Activated CD4-positive, alpha-beta memory T cell treated with anti-CD3 and anti-CD28 coated beads, Interleukin-2, amount 10 ng/mL, durations not matched to agents 7 days and 5 days (primary cell): ENCODE measurements at regions of chr17 and their contacts with region 1.

Region 1: DNA sequence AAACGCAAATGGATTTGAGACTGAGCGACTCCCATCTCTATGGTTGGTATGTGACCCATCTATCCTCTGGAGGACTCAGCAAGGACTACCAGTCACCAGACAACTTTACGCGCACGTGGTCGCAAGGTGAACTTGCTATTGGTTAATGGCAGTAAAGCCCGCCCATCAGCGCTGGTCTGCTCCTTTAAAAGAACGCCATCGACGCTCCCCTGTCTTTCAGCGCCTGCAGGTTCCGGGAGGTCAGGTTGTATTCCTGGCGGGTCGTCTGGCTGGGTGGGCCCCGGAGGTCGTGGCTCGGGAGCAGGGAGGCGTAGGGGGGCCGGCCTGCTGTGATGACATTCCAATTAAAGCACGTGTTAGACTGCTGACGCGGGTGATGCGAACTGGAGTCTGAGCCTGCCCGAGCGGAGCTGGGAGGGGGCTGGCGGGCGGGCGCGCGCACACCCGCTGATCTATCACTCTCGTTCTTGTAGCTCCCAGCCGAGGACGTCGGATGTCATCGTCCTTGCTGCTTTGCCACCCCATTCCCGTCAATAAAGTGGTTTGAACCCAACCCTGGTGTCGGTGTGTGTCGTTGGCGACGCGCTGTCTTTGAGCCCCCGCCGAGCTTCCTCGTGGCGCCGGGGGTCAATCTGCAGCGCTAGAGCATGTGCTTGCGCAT is 15.9 kb upstream of the ERN1 start:
- DNase-seq: peak; percentile 96
- H3K4me3 Mint-ChIP-seq: no peak overlapping the region
- H3K27ac Mint-ChIP-seq: no peak overlapping the region
- H3K4me1 Mint-ChIP-seq: peaks cover 25% of the 10 kb centered on the region
- H3K27me3 Mint-ChIP-seq: no peaks in the 10 kb centered on the region

Region 2: GRCh38 chr17:63931099-63931561 is 214.8 kb before region 1 on chr17:
- CTCF ChIA-PET with region 1: no interaction called
- POLR2A ChIA-PET with region 1: interaction called, 21 read pairs
- DNase-seq: peak; percentile 79
- H3K4me3 Mint-ChIP-seq: peak overlapping the region; percentile 96
- H3K27ac Mint-ChIP-seq: peak overlapping the region; percentile 90
- H3K4me1 Mint-ChIP-seq: peaks cover 31% of the 10 kb centered on the region
- H3K27me3 Mint-ChIP-seq: peaks cover 4% of the 10 kb centered on the region

Region 3: GRCh38 chr17:64025732-64026294 is 120.1 kb before region 1 on chr17:
- CTCF ChIA-PET with region 1: interaction called, 16 read pairs
- POLR2A ChIA-PET with region 1: interaction called, 54 read pairs
- DNase-seq: peak; percentile 95
- H3K4me3 Mint-ChIP-seq: peak overlapping the region; percentile 73
- H3K27ac Mint-ChIP-seq: peak overlapping the region; percentile 99
- H3K4me1 Mint-ChIP-seq: peaks cover 75% of the 10 kb centered on the region
- H3K27me3 Mint-ChIP-seq: no peaks in the 10 kb centered on the region

Region 4: GRCh38 chr17:64117981-64118979 is 27.6 kb before region 1 on chr17:
- CTCF ChIA-PET with region 1: no interaction called
- POLR2A ChIA-PET with region 1: interaction called, 12 read pairs
- DNase-seq: no peak
- H3K4me3 Mint-ChIP-seq: no peak overlapping the region
- H3K27ac Mint-ChIP-seq: no peak overlapping the region
- H3K4me1 Mint-ChIP-seq: peaks cover 80% of the 10 kb centered on the region
- H3K27me3 Mint-ChIP-seq: no peaks in the 10 kb centered on the region

Region 5: DNA sequence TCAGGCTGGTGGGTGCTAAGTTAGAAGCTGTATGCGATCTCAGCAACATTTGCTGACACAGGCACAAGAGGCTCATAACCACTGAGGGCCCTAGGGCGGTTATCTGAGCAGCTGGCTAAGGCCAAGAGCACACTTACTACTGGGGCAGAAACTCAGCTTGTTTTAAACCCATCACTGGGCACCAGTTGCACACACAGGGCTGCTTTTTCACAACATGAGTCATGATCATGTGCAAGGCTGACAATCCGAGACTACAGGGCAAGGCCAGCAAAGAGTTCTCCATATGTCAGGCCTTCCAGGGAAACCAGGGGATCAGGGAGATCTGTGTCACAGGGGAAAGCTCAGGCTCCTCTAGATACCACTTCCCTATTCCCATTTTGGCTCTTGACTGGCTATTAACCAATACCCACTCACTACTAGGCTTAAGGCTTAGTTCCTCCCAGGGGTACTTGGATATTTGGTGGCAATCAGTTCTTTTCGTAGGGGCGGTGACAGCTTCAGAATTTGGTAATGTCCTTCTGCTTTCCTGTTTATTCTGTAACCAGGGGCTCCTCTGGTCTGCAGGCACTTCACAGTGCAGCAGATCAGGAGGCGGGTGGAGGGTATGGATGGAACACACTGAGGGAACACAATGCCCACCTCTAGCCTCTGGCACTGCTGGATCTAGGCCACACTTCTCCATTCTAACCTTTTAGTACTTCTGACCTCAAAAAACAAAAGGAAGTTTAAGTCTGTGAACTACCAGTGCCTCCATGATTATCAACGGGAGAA is 29.0 kb after region 1 on chr17:
- CTCF ChIA-PET with region 1: no interaction called
- POLR2A ChIA-PET with region 1: interaction called, 16 read pairs
- DNase-seq: no peak
- H3K4me3 Mint-ChIP-seq: no peak overlapping the region
- H3K27ac Mint-ChIP-seq: no peak overlapping the region
- H3K4me1 Mint-ChIP-seq: no peaks in the 10 kb centered on the region
- H3K27me3 Mint-ChIP-seq: no peaks in the 10 kb centered on the region

Region 6: GRCh38 chr17:64281962-64282727 is 136.3 kb after region 1 on chr17:
- CTCF ChIA-PET with region 1: interaction called, 10 read pairs
- POLR2A ChIA-PET with region 1: interaction called, 17 read pairs
- DNase-seq: peak; percentile 55
- H3K4me3 Mint-ChIP-seq: no peak overlapping the region
- H3K27ac Mint-ChIP-seq: no peak overlapping the region
- H3K4me1 Mint-ChIP-seq: peaks cover 6% of the 10 kb centered on the region
- H3K27me3 Mint-ChIP-seq: no peaks in the 10 kb centered on the region

Region 7: GRCh38 chr17:64315032-64315490 is 169.2 kb after region 1 on chr17:
- CTCF ChIA-PET with region 1: no interaction called
- POLR2A ChIA-PET with region 1: no interaction called
- DNase-seq: no peak
- H3K4me3 Mint-ChIP-seq: no peak overlapping the region
- H3K27ac Mint-ChIP-seq: no peak overlapping the region
- H3K4me1 Mint-ChIP-seq: no peaks in the 10 kb centered on the region
- H3K27me3 Mint-ChIP-seq: peaks cover 9% of the 10 kb centered on the region